ENCODE measurements at regions of chr18 and their contacts with region 1.

Region 1: DNA sequence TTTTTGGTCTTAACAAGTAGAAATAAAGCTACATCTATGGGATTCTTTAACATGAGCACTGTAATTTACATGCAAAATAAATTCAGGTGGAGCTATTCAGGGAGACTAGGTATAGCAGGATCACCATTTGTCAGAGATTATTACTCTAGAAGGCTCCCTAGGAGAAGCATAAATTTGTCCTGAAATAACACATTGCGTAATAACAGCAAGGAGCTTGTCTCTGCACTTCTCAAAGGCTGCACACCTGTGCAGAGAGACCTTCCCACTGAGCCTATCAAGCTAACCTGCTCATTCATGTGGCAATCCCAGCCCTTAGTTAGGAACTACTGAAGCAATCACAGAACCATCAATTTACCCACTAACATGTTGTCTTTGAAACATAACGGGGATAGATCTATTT is 437.4 kb upstream of the MC4R start:
- DNase-seq: no peak
- H3K4me3 ChIP-seq: no peak overlapping the region
- H3K27ac ChIP-seq: no peak overlapping the region
- H3K4me1 ChIP-seq: no peaks in the 10 kb centered on the region
- H3K27me3 ChIP-seq: no peaks in the 10 kb centered on the region
- CTCF ChIP-seq: no peak
- POLR2A ChIP-seq: no peak

Region 2: GRCh38 chr18:60684843-60685513 is 125.0 kb before region 1 on chr18:
- CTCF ChIA-PET with region 1: interaction called, 7 read pairs
- POLR2A ChIA-PET with region 1: no interaction called
- dilution Hi-C with region 1: no loop called
- intact Hi-C with region 1: loop called (anchors 5 kb)
- DNase-seq: peak; percentile 57
- H3K4me3 ChIP-seq: no peak overlapping the region
- H3K27ac ChIP-seq: no peak overlapping the region
- H3K4me1 ChIP-seq: no peaks in the 10 kb centered on the region
- H3K27me3 ChIP-seq: peaks cover 0 to 1% of the 10 kb centered on the region in 2 experiments
- CTCF ChIP-seq: peak; percentile 35 to 37
- POLR2A ChIP-seq: no peak

Region 3: DNA sequence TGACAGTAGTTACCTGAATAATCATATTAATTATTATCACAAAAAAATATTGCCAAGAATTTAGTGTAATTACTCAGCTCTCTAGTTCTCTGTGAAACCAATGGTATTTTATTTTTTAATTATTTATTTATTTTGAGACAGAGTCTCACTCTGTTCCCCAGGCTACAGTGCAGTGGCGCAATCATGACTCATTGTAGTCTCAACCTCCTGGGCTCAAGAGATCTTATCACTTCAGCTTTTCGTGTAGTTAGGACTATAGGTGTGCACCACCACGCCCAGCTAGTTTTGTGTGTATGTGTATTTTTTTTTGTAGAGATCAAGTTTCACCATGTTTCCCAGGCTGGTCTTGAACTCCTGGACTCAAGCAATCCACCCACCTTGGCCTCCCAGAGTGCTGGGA is 82.9 kb after region 1 on chr18:
- CTCF ChIA-PET with region 1: interaction called, 18 read pairs
- POLR2A ChIA-PET with region 1: no interaction called
- dilution Hi-C with region 1: no loop called
- intact Hi-C with region 1: no loop called
- DNase-seq: no peak
- H3K4me3 ChIP-seq: no peak overlapping the region
- H3K27ac ChIP-seq: peak overlapping the region; percentile 68
- H3K4me1 ChIP-seq: peaks cover 29% of the 10 kb centered on the region
- H3K27me3 ChIP-seq: no peaks in the 10 kb centered on the region
- CTCF ChIP-seq: no peak
- POLR2A ChIP-seq: no peak

Region 4: GRCh38 chr18:60966876-60967275 is 156.9 kb after region 1 on chr18:
- CTCF ChIA-PET with region 1: interaction called, 12 read pairs
- POLR2A ChIA-PET with region 1: no interaction called
- dilution Hi-C with region 1: no loop called
- intact Hi-C with region 1: no loop called
- DNase-seq: peak; percentile 76
- H3K4me3 ChIP-seq: no peak overlapping the region
- H3K27ac ChIP-seq: peak overlapping the region; percentile 2
- H3K4me1 ChIP-seq: peaks cover 16% of the 10 kb centered on the region
- H3K27me3 ChIP-seq: no peaks in the 10 kb centered on the region
- CTCF ChIP-seq: no peak
- POLR2A ChIP-seq: no peak

Region 5: DNA sequence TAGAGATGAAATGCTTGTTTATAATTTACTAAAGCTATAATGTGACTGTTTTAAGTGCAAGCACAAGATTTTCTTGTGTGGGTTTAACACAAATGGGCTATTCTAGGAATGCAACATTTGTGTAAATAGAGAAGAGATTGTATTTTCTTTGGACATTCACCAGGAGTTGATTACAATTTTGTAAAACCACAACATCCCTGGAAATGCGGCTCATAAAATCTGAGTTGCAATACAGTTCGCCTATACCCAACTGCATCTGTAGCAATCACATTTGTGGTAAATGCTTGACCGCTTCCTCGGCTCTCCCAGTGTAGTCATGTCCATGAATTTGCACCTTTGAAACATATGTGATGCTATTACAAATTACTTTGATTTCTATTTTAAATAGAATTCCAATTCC is 174.6 kb after region 1 on chr18:
- CTCF ChIA-PET with region 1: interaction called, 26 read pairs
- POLR2A ChIA-PET with region 1: no interaction called
- dilution Hi-C with region 1: no loop called
- intact Hi-C with region 1: loop called (anchors 5 kb)
- DNase-seq: no peak
- H3K4me3 ChIP-seq: no peak overlapping the region
- H3K27ac ChIP-seq: no peak overlapping the region
- H3K4me1 ChIP-seq: peaks cover 34% of the 10 kb centered on the region
- H3K27me3 ChIP-seq: no peaks in the 10 kb centered on the region
- CTCF ChIP-seq: no peak
- POLR2A ChIP-seq: no peak

Region 6: GRCh38 chr18:61085761-61086160 is 275.8 kb after region 1 on chr18:
- CTCF ChIA-PET with region 1: interaction called, 22 read pairs
- POLR2A ChIA-PET with region 1: no interaction called
- dilution Hi-C with region 1: no loop called
- intact Hi-C with region 1: loop called (anchors 2 kb)
- DNase-seq: no peak
- H3K4me3 ChIP-seq: no peak overlapping the region
- H3K27ac ChIP-seq: no peak overlapping the region
- H3K4me1 ChIP-seq: no peaks in the 10 kb centered on the region
- H3K27me3 ChIP-seq: no peaks in the 10 kb centered on the region
- CTCF ChIP-seq: no peak
- POLR2A ChIP-seq: no peak

Region 7: GRCh38 chr18:61322265-61322873 is 512.4 kb after region 1 on chr18:
- CTCF ChIA-PET with region 1: interaction called, 40 read pairs
- POLR2A ChIA-PET with region 1: no interaction called
- dilution Hi-C with region 1: no loop called
- intact Hi-C with region 1: loop called (anchors 5 kb)
- DNase-seq: peak; percentile 53
- H3K4me3 ChIP-seq: no peak overlapping the region
- H3K27ac ChIP-seq: no peak overlapping the region
- H3K4me1 ChIP-seq: no peaks in the 10 kb centered on the region
- H3K27me3 ChIP-seq: no peaks in the 10 kb centered on the region
- CTCF ChIP-seq: peak; percentile 82 to 89
- POLR2A ChIP-seq: no peak